ENCODE measurements at regions of chr12 and their contacts with region 1.

Region 1: DNA sequence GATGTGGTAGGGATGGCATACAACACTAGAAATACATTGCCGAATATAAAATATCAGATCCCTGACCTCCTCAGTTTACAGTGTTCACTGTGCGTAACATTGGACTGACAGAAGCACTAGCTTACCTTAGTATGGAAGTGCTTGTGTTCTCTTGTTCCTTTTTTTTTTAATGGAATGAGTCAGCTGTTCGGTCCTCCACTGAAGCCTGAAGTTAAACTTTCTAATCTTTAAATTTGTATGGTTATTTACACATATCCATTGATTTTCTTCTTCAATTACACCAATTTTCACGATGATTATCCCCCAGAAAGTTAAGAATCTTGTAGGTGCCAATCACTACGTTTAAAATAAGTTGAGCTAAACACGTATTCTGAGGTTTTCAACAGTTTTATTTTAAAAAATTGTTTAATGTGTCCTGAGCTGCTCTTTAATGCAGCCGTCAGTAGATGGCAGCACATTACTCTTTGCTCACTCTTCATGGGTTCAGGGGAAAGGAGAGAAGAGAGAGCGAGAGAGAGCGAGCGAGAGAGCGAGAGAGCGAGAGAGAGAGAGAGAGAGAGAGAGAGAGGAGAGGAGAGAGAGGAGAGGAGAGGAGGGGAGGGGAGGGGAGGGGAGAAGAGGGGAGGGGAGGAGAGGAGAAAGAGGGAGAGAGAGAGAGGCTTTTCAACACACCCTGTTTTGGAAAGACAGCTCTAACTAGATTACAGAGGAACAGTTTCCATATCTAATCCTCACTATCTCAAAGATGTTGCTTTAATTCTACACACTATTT is 134.7 kb upstream of the SCAF11 start:
- DNase-seq: peak; percentile 62
- ATAC-seq: peak; percentile 97
- H3K4me3 Mint-ChIP-seq: peak overlapping the region; percentile 10
- H3K27ac Mint-ChIP-seq: no peak overlapping the region
- H3K4me1 Mint-ChIP-seq: no peaks in the 10 kb centered on the region
- H3K27me3 Mint-ChIP-seq: peaks cover 2% of the 10 kb centered on the region

Region 2: DNA sequence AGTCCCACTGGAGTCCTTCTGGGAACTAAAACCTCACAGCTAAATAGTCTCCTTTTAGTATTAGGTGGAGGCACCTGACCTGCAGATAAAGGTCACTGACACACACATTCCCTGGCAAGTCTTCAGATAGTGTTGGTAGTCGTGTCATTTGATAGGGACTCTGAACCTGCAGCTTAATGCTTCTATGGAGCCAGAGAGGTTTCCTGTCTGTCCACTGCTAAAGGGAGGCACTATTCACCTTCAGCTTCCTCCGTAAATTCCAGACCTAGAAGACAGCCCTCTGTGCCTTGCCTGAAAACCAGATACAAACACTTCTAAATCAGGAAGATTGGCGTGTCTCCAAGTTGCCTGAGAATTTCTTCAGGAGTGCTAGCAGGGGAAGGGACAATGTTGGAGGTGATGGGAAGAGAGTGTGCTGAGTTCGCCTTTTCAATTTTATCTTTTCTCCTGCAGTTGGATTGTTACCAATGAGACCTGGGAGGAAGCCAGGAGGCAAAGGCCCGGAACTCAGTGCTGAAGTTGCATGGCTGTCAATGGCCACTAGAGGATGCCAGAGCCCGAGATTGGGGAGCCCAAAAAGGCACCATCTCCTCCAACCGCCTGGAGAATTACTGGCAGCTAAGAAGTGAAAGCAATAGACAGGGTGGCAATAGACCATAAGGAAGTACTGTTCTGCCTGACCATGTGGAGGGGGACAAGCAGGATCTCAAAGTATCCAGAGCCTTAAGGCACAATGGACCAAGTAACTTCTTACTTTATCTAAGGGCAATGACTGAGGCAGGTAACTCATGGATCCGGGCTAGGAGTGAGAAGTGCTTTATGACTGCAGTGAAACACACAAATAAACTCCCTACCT is 53.0 kb before region 1 on chr12:
- CTCF ChIA-PET with region 1: interaction called, 18 read pairs
- POLR2A ChIA-PET with region 1: no interaction called
- intact Hi-C with region 1: no loop called
- DNase-seq: peak; percentile 80
- ATAC-seq: peak; percentile 98
- H3K4me3 Mint-ChIP-seq: no peak overlapping the region
- H3K27ac Mint-ChIP-seq: peak overlapping the region; percentile 47
- H3K4me1 Mint-ChIP-seq: peaks cover 3% of the 10 kb centered on the region
- H3K27me3 Mint-ChIP-seq: peaks cover 2% of the 10 kb centered on the region

Region 3: GRCh38 chr12:46153268-46153872 is 28.3 kb after region 1 on chr12:
- CTCF ChIA-PET with region 1: interaction called, 7 read pairs
- POLR2A ChIA-PET with region 1: no interaction called
- intact Hi-C with region 1: loop called in 1 of 2 experiments (anchors 2 kb)
- DNase-seq: no peak
- ATAC-seq: no peak
- H3K4me3 Mint-ChIP-seq: no peak overlapping the region
- H3K27ac Mint-ChIP-seq: no peak overlapping the region
- H3K4me1 Mint-ChIP-seq: peaks cover 9% of the 10 kb centered on the region
- H3K27me3 Mint-ChIP-seq: peaks cover under 1% of the 10 kb centered on the region

Region 4: GRCh38 chr12:46661110-46661845 is 536.2 kb after region 1 on chr12:
- CTCF ChIA-PET with region 1: interaction called, 3 read pairs
- POLR2A ChIA-PET with region 1: no interaction called
- intact Hi-C with region 1: loop called in 1 of 2 experiments (anchors 5 kb)
- DNase-seq: peak; percentile 11
- ATAC-seq: peak; percentile 79
- H3K4me3 Mint-ChIP-seq: no peak overlapping the region
- H3K27ac Mint-ChIP-seq: no peak overlapping the region
- H3K4me1 Mint-ChIP-seq: peaks cover 36% of the 10 kb centered on the region
- H3K27me3 Mint-ChIP-seq: no peaks in the 10 kb centered on the region

Region 5: GRCh38 chr12:46983393-46984266 is 858.6 kb after region 1 on chr12:
- CTCF ChIA-PET with region 1: interaction called, 15 read pairs
- POLR2A ChIA-PET with region 1: no interaction called
- intact Hi-C with region 1: loop called in 1 of 2 experiments (anchors 5 kb)
- DNase-seq: peak; percentile 44
- ATAC-seq: peak; percentile 66
- H3K4me3 Mint-ChIP-seq: no peak overlapping the region
- H3K27ac Mint-ChIP-seq: no peak overlapping the region
- H3K4me1 Mint-ChIP-seq: peaks cover 4% of the 10 kb centered on the region
- H3K27me3 Mint-ChIP-seq: peaks cover 19% of the 10 kb centered on the region